GM12878 (cell line): ENCODE measurements at regions of chr15 and their contacts with region 1.

Region 1: GRCh38 chr15:48963524-48964113 is at the start of gene SHC4:
- DNase-seq: no peak
- ATAC-seq: peak; percentile 34
- H3K4me3 ChIP-seq: peak within 1 kb of the TSS; percentile 54
- H3K27ac ChIP-seq: no peak within 1 kb of the TSS
- H3K4me1 ChIP-seq: no peaks in the 10 kb centered on the region; the same call in 1 of the 2 replicates
- H3K27me3 ChIP-seq: peaks cover 0 to 11% of the 10 kb centered on the region in 2 experiments; a peak in 2 of 4 replicates
- CTCF ChIP-seq: 0 out of 6 replicates have a peak, but pooled peaks of 1 of the 3 experiments have one; percentile 5
- EP300 ChIP-seq: no peak
- POLR2A ChIP-seq: no peak
- RAD21 ChIP-seq: no peak
- polyA plus RNA-seq, gene SHC4: 0.04 to 0.08 TPM

Region 2: DNA sequence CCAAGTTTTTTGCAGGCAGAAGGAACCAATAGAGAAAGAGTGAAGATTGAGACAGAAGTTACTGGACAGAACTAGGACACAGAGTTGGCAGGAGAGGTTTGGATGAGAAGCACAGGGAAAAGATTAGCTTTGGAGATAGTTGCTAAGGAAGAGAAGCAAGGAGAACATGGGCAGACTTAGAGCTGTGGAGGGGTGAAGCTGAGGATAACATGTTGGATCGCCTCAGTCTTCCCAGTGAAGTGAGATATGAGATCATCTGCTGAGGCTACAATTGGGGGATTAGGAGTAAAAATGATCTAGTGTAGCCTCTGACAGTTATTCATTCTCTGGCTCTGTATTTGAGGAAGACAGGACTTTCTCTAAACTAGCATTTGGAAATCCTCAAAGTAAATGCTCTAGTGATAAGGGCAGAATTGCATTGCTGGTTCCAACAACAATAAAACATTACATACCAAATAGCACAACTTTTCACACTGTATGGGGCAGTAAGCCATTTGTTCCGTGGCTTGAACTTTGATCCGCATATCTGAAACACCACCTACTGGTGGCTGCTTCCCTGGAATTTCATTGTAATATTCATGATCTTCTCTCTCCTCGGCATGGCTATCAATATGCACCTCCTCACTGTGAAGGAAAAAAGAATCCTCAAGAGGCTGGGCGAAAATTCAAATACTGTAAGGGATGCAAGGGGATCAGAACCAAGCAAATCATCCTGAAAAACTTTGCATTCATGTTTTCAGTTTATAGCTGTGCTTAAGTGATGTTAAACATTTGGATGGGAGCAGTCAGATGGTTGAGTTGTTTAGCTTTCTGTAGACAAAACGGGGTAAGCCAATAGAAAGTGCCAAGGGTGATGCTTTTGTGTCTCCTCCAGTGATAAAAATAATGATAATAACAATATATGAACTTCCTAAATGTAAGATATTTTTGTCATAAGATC is 107.8 kb before region 1 on chr15:
- CTCF ChIA-PET with region 1: interaction called, 129 read pairs
- POLR2A ChIA-PET with region 1: no interaction called
- RAD21 ChIA-PET with region 1: interaction called, 78 read pairs
- SMC1A ChIA-PET with region 1: interaction called, 112 read pairs
- in situ Hi-C with region 1: no loop called
- intact Hi-C with region 1: no loop called
- DNase-seq: no peak
- ATAC-seq: no peak
- H3K4me3 ChIP-seq: no peak overlapping the region
- H3K27ac ChIP-seq: no peak overlapping the region
- H3K4me1 ChIP-seq: no peaks in the 10 kb centered on the region
- H3K27me3 ChIP-seq: no peaks in the 10 kb centered on the region
- CTCF ChIP-seq: peak in 1 of 3 experiments; percentile 25; a peak in 2 of 6 replicates
- EP300 ChIP-seq: no peak
- POLR2A ChIP-seq: no peak
- RAD21 ChIP-seq: 0 out of 2 replicates have a peak, but pooled peaks have one; percentile 10

Region 3: DNA sequence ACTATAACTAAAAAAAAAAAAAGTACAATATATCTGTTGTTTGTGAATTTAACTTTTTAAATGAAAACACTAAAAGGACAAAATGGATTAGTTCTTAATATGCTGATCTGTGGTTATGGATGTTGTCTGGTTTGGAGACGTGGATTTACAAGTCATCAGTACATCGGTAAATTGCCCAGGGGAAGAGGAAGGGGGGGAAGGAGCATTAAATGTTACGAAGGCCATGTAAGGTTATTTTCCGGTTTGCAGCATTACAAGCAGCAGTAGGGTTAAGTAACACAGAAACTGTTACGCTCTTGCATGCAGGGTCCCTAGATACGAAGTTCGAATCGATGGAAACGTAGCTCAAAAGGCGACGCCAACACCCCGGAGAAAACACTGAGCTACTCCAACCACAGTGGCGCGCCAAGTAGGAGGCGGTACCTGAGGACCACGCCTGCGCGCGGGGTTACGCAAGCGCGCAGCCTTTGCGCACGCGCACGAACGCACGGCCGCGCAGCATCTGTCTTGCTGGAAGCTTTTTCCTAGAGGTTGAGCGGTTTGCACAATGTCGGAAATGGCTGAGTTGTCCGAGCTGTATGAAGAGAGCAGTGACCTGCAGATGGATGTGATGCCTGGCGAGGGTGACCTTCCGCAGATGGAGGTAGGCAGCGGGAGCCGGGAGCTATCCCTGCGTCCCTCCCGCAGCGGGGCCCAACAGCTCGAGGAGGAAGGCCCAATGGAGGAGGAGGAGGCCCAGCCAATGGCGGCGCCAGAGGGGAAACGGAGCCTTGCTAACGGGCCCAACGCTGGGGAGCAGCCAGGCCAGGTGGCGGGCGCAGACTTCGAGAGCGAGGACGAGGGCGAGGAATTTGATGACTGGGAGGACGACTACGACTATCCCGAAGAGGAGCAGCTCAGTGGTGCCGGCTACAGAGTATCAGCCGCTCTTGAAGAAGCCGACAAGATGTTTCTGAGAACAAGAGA is 85.7 kb before region 1 on chr15 and contains the start of gene EID1:
- CTCF ChIA-PET with region 1: interaction called, 18 read pairs
- POLR2A ChIA-PET with region 1: interaction called, 5 read pairs
- RAD21 ChIA-PET with region 1: interaction called, 15 read pairs
- SMC1A ChIA-PET with region 1: interaction called, 55 read pairs
- in situ Hi-C with region 1: no loop called
- intact Hi-C with region 1: loop called (anchors 5 kb)
- DNase-seq: peak; percentile 87
- ATAC-seq: peak; percentile 94
- H3K4me3 ChIP-seq: peak within 1 kb of the TSS; percentile 67
- H3K27ac ChIP-seq: peak within 1 kb of the TSS; percentile 85
- H3K4me1 ChIP-seq: peaks cover 4% of the 10 kb centered on the region
- H3K27me3 ChIP-seq: no peaks in the 10 kb centered on the region
- CTCF ChIP-seq: no peak
- EP300 ChIP-seq: peak in 1 of 2 experiments; percentile 40; a peak in 1 of 4 replicates
- POLR2A ChIP-seq: peak; percentile 98
- RAD21 ChIP-seq: no peak
- polyA plus RNA-seq, gene EID1: 45.6 to 79.5 TPM

Region 4: GRCh38 chr15:48940448-48940893 is 23.1 kb before region 1 on chr15:
- CTCF ChIA-PET with region 1: interaction called, 26 read pairs
- POLR2A ChIA-PET with region 1: interaction called, 4 read pairs
- RAD21 ChIA-PET with region 1: interaction called, 25 read pairs
- SMC1A ChIA-PET with region 1: interaction called, 40 read pairs
- in situ Hi-C with region 1: no loop called
- intact Hi-C with region 1: no loop called
- DNase-seq: peak; percentile 81
- ATAC-seq: peak; percentile 95
- H3K4me3 ChIP-seq: no peak overlapping the region
- H3K27ac ChIP-seq: no peak overlapping the region
- H3K4me1 ChIP-seq: peaks cover 3% of the 10 kb centered on the region; the same call in 1 of the 2 replicates
- H3K27me3 ChIP-seq: no peaks in the 10 kb centered on the region
- CTCF ChIP-seq: no peak
- EP300 ChIP-seq: peak; percentile 95 to 98
- POLR2A ChIP-seq: no peak
- RAD21 ChIP-seq: no peak

Region 5: DNA sequence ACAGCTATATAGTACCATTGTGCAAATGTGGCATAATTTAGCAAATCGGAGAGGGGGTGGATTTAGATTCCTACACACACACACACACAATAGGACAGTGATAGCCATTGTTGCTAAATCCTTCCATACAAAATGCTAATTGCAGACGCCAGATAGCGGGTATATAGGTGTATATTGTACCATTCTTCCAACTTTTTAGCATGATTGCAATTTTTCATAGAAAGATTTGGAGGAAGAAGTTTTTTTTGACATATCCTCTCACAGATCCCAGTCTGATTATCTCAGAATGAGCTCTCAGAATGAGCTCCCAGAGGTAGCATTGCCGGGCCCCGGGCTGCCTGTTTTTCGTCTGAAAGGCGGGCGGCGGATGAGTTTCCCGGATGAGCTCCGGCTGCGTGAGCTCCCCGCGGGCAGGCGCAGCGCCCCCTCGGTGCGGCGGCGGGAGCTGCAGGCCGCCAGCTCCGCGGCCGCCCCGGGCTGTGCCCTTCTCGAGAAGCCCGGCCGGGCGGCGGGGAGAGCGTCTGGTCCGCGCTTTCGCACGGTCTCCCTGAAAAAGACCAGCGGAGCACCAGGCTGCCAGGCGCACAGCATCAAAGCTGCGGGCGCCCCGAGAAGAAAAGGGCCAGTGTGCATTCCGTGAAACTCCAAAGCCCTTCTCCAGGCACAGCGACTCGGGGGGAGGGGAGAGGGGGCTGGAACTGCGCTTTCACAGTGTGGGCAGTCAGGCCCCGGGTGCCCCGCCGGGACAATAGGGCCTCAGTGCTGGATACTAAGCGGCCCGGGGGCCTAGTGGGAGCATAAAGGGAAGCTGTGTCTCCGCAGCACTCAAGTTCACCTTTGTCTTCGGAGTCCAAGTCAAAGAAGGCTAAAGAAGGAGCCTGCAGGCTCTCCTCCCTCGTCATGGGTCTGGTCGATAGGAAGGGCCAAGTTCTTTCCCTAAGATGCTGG is 12.1 kb after region 1 on chr15:
- CTCF ChIA-PET with region 1: interaction called, 79 read pairs
- POLR2A ChIA-PET with region 1: interaction called, 9 read pairs
- RAD21 ChIA-PET with region 1: interaction called, 32 read pairs
- SMC1A ChIA-PET with region 1: interaction called, 41 read pairs
- in situ Hi-C with region 1: no loop called
- intact Hi-C with region 1: no loop called
- DNase-seq: no peak
- ATAC-seq: peak; percentile 99
- H3K4me3 ChIP-seq: peak overlapping the region; percentile 52; the same call in 1 of the 2 replicates
- H3K27ac ChIP-seq: no peak overlapping the region
- H3K4me1 ChIP-seq: no peaks in the 10 kb centered on the region
- H3K27me3 ChIP-seq: no peaks in the 10 kb centered on the region
- CTCF ChIP-seq: peak; percentile 74 to 93 (median 76)
- EP300 ChIP-seq: no peak
- POLR2A ChIP-seq: peak; percentile 23; the same call in 1 of the 2 replicates
- RAD21 ChIP-seq: peak; percentile 54

Region 6: GRCh38 chr15:50107591-50108408 is 1144.2 kb after region 1 on chr15:
- CTCF ChIA-PET with region 1: no interaction called
- POLR2A ChIA-PET with region 1: no interaction called
- RAD21 ChIA-PET with region 1: no interaction called
- SMC1A ChIA-PET with region 1: no interaction called
- in situ Hi-C with region 1: no loop called
- intact Hi-C with region 1: no loop called
- DNase-seq: peak; percentile 68
- ATAC-seq: peak; percentile 97
- H3K4me3 ChIP-seq: no peak overlapping the region
- H3K27ac ChIP-seq: no peak overlapping the region
- H3K4me1 ChIP-seq: peaks cover 22% of the 10 kb centered on the region
- H3K27me3 ChIP-seq: peaks cover 0 to 3% of the 10 kb centered on the region in 2 experiments; a peak in 2 of 4 replicates
- CTCF ChIP-seq: no peak
- EP300 ChIP-seq: peak; percentile 68 to 85; a peak in 3 of 4 replicates
- POLR2A ChIP-seq: no peak
- RAD21 ChIP-seq: no peak